Panc1 (cell line): ENCODE measurements at regions of chr10 and their contacts with region 1.

Region 1: DNA sequence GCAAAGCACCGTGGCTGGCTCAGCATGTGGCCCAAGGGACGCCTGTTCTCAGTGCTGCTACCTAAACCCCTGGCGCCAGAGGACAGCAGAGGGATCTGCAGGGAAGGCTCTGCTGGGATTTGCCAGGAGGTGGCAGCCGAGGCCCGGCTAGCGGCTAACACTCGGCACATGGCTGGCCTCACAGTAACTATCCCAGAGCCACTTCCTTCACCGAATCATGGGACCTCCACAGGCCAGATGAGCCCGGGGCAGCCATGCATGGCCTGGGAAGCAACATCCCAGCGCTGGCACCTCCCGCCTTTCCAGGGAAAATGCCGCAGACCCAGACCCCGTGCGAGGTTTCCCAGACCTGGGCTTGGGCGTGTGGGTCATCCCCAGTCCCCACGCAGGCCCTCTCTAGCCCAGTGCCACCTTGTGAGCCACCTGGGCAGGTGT is 36.4 kb downstream of the DPYSL4 start:
- DNase-seq: peak; percentile 72
- ATAC-seq: peak; percentile 97
- H3K4me3 ChIP-seq: no peak overlapping the region
- H3K27ac ChIP-seq: peak overlapping the region; percentile 72
- H3K4me1 ChIP-seq: peaks cover 8% of the 10 kb centered on the region
- H3K27me3 ChIP-seq: no peaks in the 10 kb centered on the region
- CTCF ChIP-seq: peak; percentile 100

Region 2: DNA sequence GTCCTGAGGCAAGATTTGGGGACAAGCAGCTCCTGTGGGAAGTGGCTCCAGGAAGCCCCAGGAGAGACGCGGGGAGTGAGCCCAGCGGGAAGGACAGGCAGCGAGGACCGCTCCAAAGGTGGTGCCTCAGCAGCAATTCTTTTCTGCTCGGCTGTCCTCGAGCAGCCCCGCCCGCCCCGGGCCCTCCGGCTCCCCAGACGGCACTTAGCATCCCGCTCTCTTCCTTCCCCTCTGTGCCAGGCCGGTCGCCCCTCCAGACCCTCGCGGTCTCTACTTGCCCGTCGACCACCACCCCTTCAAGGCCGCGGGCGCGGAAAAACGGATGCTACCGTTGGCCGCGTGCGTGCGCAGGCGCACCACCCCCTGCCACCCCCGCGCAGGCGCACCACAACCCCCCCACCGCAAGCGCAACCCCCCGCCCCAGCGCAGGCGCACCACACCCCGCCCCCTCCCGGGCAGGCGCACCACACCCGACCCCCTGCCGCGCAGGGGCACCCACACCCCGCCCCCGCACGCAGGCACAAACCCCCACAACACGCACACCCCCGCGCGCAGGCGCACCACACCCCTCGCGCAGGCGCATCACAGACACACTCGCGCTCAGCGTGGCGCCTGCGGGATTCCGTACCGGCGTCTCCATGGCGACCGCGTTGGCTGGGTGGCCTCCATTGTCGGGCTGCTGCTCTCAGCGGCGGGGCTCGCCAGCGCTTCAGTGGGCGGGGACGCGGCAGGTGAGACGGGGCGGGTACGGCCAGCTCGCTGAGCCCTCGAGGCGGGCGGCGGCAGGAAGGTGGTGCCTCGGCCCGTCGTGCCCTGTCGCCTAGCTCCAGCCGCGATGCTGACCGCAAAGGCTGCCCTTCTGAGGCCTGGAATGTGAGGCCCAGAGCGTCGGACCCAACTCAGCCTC is 108.6 kb after region 1 on chr10 and contains the start of gene LRRC27:
- CTCF ChIA-PET with region 1: no interaction called
- POLR2A ChIA-PET with region 1: no interaction called
- in situ Hi-C with region 1: no loop called
- intact Hi-C with region 1: loop called (anchors 5 kb)
- DNase-seq: peak; percentile 81
- ATAC-seq: peak; percentile 89
- H3K4me3 ChIP-seq: peak within 1 kb of the TSS; percentile 98 to 100
- H3K27ac ChIP-seq: peak within 1 kb of the TSS; percentile 99
- H3K4me1 ChIP-seq: peaks cover 29% of the 10 kb centered on the region
- H3K27me3 ChIP-seq: no peaks in the 10 kb centered on the region
- CTCF ChIP-seq: no peak
- total RNA-seq, gene LRRC27: 15.7 TPM

Region 3: DNA sequence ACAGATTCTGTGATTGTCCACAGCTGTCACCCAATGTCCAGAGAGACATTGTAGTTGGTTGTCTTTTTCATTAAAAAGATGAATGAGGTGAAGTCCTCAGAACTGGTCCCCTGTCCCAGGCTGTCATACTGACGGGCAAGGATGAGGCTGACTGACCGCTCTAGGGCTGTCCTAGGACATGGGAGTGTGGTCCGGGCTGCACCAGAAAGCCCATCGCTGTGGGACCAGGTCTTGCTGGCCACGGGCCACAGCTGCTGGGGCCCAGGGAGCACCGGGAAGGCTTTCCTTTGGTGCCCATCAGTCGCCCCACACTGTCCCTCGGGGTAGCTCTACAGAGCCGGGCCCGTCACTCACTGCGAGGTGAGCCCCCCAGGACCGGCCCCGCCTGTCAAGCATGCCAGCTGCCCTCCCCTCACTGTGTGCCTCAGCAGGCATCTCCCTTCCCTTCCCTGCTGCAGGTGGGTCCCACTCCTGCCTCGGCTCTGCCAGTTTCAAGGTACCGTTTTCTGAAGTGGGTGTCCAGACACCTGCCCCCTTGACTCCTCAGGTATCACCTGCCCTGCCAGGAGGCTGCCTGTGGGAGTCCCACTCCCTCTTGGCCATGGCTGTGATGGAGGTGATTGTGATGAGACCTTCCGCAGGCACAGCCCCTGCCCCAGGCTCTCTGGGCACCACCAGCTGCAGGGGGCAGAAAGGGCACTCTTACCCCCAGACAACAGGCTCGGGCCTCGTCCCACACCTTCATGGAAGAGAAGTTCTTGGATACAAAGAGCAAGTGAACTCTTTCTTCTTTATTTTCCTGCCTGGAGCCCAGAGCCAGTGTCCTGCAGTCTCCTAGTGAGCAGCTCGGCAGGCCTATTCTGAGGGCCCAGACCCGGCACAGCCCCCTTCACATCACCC is 130.5 kb after region 1 on chr10:
- CTCF ChIA-PET with region 1: no interaction called
- POLR2A ChIA-PET with region 1: no interaction called
- in situ Hi-C with region 1: no loop called
- intact Hi-C with region 1: loop called (anchors 1 kb)
- DNase-seq: no peak
- ATAC-seq: 0 out of 2 replicates have a peak, but pooled peaks have one; percentile 9
- H3K4me3 ChIP-seq: no peak overlapping the region
- H3K27ac ChIP-seq: no peak overlapping the region
- H3K4me1 ChIP-seq: no peaks in the 10 kb centered on the region
- H3K27me3 ChIP-seq: no peaks in the 10 kb centered on the region
- CTCF ChIP-seq: no peak

Region 4: GRCh38 chr10:132452631-132453469 is 229.7 kb after region 1 on chr10:
- CTCF ChIA-PET with region 1: interaction called, 3 read pairs
- POLR2A ChIA-PET with region 1: no interaction called
- in situ Hi-C with region 1: no loop called
- intact Hi-C with region 1: loop called (anchors 5 kb)
- DNase-seq: no peak
- ATAC-seq: peak; percentile 71
- H3K4me3 ChIP-seq: peak overlapping the region; percentile 6 to 44; a peak in 2 of 4 replicates
- H3K27ac ChIP-seq: peak overlapping the region; percentile 67
- H3K4me1 ChIP-seq: peaks cover 46% of the 10 kb centered on the region
- H3K27me3 ChIP-seq: no peaks in the 10 kb centered on the region
- CTCF ChIP-seq: peak; percentile 100